ENCODE measurements at regions of chr9 and their contacts with region 1.

Region 1: GRCh38 chr9:34493972-34494535 is 28.7 kb downstream of the ENHO start:
- DNase-seq: peak; percentile 71
- H3K4me3 ChIP-seq: no peak overlapping the region
- H3K27ac ChIP-seq: no peak overlapping the region
- H3K4me1 ChIP-seq: no peaks in the 10 kb centered on the region
- H3K27me3 ChIP-seq: 0 out of 2 replicates have a peak, but pooled peaks cover 3% of the 10 kb centered on the region

Region 2: GRCh38 chr9:34437006-34437925 is 56.8 kb before region 1 on chr9:
- in situ Hi-C with region 1: loop called (anchors 10 kb)
- DNase-seq: peak; percentile 67
- H3K4me3 ChIP-seq: no peak overlapping the region
- H3K27ac ChIP-seq: no peak overlapping the region
- H3K4me1 ChIP-seq: no peaks in the 10 kb centered on the region
- H3K27me3 ChIP-seq: no peaks in the 10 kb centered on the region

Measured in GM23248 (cell line).